MCF 10A (cell line): ENCODE measurements at regions of chr7 and their contacts with region 1.

Region 1: DNA sequence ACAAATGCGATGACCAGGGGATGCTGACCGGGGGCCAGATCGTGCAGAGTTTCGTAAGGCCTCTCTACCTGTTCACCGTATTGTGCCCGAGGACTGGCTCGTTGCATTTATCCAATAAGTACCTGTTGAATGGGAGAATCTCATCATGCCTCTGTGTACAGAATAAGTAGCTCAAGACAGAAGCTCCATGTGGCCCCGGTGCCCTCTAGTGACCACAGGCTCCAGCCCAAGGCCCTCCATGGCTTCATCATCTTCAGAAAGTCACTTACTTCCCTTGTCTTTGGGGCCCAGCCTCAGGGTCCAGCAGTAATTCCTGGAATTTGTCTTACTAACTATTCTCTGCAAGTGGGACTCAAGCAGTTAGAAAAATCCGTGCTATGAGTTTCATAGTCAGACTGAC is 151.0 kb downstream of the CHN2 start:
- DNase-seq: peak; percentile 43
- H3K4me3 Mint-ChIP-seq: no peak overlapping the region
- H3K27ac Mint-ChIP-seq: no peak overlapping the region
- H3K4me1 Mint-ChIP-seq: peaks cover 19% of the 10 kb centered on the region
- H3K27me3 Mint-ChIP-seq: no peaks in the 10 kb centered on the region
- CTCF ChIP-seq: peak; percentile 63

Region 2: DNA sequence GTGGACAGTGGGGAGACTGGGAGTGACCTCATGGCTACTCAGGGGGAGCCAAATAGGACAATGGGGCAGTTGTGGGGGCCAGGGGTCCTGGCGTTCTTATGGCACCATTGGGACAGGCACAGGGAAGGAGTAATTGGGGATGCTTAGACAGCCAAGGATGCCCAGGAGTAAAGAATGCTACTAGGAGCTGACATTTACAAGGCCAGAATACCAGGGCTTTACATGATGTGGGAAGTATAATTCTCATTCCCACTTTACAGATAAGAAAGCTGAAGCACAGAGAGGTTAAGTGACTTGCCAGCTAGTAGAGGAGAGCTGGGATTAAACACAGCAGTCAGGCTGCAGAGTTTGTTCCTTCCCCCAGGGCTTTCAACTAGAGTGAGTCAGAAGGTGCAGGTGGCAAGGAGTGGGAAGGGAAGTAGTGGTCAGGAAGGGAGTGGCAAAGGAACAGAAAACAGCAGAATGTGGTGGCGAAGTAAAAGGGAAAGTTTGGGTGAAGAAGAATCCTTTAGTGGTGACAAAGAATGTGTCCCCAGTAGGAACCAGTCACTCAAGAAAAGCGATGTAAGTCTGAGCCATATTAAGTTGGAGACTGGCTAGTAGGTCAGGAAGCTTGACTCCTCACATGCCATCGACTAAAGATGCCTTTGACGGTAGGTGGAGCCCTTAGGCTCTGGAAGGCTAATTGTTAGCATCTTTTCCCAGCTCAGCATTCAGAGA is 232.1 kb before region 1 on chr7:
- CTCF ChIA-PET with region 1: interaction called, 3 read pairs
- POLR2A ChIA-PET with region 1: interaction called, 6 read pairs
- intact Hi-C with region 1: loop called (anchors 1 kb)
- DNase-seq: peak; percentile 82
- H3K4me3 Mint-ChIP-seq: peak overlapping the region; percentile 68
- H3K27ac Mint-ChIP-seq: peak overlapping the region; percentile 84
- H3K4me1 Mint-ChIP-seq: peaks cover 51% of the 10 kb centered on the region
- H3K27me3 Mint-ChIP-seq: no peaks in the 10 kb centered on the region
- CTCF ChIP-seq: peak; percentile 40